ENCODE measurements at regions of chr3 and their contacts with region 1.

Region 1: GRCh38 chr3:47315069-47315647 is 32.4 kb downstream of the KLHL18 start:
- DNase-seq: no peak
- CTCF ChIP-seq: no peak

Region 2: DNA sequence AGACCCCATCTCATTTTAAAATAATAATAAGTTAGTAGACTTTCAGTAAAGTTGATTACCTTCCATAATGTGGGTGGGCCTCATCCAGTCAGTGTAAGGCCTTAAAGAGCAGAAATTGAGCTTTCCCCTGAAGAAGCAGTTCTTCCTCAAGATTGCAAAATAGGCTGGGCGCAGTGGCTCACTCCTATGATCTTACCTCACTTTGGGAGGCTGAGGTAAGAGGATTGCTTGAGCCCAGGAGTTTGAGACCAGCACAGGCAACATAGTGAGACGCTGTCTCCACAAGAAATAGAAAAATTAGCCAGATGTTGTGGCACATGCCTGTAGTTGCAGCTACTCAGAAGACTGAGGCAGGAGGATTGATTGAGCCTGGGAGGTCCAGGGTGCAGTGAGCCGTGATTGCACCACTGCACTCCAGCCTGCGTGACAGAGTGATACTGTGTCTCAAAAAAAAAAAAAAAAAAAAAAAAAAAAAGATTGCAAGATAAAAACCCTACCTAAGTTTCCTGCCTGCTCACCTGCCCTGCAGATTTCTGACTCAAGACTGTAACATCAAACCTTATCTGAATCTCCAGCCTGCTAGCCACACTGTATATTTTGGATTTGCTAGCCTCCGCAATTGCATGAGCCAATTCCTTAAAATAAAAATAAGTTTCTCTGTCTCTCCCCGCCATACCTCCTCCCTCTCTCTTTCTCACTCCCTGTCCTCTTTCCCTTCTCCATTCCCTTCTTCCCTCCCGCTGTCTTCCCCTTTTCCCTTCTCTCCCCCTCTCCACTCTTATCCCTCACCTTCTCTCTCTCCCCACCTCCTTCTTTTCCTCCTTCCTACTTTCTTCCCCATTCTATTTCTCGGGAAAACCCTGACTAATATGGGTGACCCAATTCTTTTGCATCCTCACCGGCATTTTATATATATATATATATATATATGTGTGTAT is 15.5 kb before region 1 on chr3:
- CTCF ChIA-PET with region 1: interaction called, 24 read pairs
- POLR2A ChIA-PET with region 1: interaction called, 3 read pairs
- DNase-seq: no peak
- CTCF ChIP-seq: no peak

Measured in GM10248 (cell line).